ENCODE measurements at regions of chr3 and their contacts with region 1.

Region 1: DNA sequence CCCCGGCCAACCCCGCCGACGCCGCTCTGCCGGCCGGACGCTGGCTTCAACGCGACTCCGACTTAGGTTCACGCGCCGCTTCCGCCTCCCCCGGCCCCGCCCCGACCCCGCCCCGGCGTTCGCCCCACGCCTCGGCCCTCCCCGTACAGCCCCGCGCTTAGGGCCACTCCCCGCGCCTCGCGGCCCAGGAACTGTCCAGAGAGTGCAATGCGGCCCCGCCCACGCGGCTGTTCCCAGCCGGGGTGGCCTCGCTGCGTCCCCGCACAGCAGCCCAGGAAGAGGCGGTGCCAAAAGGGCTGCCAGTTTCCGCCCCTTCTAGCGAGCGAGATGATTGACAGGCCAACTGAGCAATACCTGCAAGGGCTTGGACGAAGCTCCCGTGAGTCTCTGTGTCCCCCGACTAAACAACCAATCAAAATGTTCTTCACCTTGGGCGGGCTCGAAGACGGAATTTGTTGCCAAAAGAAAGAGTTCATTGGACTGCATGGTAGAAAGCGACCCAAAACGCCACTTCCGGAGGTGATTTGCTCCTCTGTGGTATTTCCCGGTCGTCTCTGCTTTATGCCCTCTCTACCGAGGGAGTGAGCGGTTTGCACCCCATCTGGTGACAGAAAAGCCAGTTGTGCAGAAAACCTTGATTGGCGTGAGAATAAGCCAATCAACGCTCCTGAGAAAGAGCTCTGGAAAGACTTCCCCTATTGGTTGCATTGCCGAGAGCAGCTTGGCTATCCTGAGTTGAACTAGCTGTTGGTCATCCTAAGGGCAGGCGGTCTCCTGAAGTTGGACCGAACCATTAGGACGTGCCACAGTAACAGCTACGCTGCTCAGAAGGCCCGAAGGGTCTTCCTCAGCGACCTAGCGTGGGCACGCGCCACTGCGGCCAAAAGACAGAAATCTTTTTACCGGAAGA is at the start of gene UBP1:
- DNase-seq: peak; percentile 98 to 99 (median 99)
- H3K4me3 ChIP-seq: peak within 1 kb of the TSS; percentile 93 to 97
- H3K4me3 Mint-ChIP-seq: peak within 1 kb of the TSS; percentile 95 to 100 (median 99)
- H3K27ac ChIP-seq: peak within 1 kb of the TSS; percentile 91
- H3K27ac Mint-ChIP-seq: peak within 1 kb of the TSS; percentile 98 to 100 (median 100)
- H3K4me1 ChIP-seq: peaks cover 46% of the 10 kb centered on the region
- H3K4me1 Mint-ChIP-seq: peaks cover 31 to 57% (median 49%) of the 10 kb centered on the region in 4 donors
- H3K27me3 ChIP-seq: no peaks in the 10 kb centered on the region
- H3K27me3 Mint-ChIP-seq: no peaks in the 10 kb centered on the region
- total RNA-seq, gene UBP1: 91.8 to 94.1 TPM

Region 2: GRCh38 chr3:32106280-32106928 is 1334.2 kb before region 1 on chr3 and contains the start of gene GPD1L:
- CTCF ChIA-PET with region 1: no interaction called
- POLR2A ChIA-PET with region 1: no interaction called
- intact Hi-C with region 1: loop called (anchors 2 kb)
- DNase-seq: peak; percentile 88 to 91 (median 90)
- H3K4me3 ChIP-seq: peak within 1 kb of the TSS; percentile 12 to 87
- H3K4me3 Mint-ChIP-seq: peak within 1 kb of the TSS; percentile 94 to 98 (median 97)
- H3K27ac ChIP-seq: peak within 1 kb of the TSS; percentile 61
- H3K27ac Mint-ChIP-seq: peak within 1 kb of the TSS; percentile 75 to 95 (median 91)
- H3K4me1 ChIP-seq: peaks cover 33% of the 10 kb centered on the region
- H3K4me1 Mint-ChIP-seq: peaks cover 25 to 49% (median 36%) of the 10 kb centered on the region in 4 donors
- H3K27me3 ChIP-seq: no peaks in the 10 kb centered on the region
- H3K27me3 Mint-ChIP-seq: no peaks in the 10 kb centered on the region
- total RNA-seq, gene GPD1L: 22.7 to 32.5 TPM

Region 3: DNA sequence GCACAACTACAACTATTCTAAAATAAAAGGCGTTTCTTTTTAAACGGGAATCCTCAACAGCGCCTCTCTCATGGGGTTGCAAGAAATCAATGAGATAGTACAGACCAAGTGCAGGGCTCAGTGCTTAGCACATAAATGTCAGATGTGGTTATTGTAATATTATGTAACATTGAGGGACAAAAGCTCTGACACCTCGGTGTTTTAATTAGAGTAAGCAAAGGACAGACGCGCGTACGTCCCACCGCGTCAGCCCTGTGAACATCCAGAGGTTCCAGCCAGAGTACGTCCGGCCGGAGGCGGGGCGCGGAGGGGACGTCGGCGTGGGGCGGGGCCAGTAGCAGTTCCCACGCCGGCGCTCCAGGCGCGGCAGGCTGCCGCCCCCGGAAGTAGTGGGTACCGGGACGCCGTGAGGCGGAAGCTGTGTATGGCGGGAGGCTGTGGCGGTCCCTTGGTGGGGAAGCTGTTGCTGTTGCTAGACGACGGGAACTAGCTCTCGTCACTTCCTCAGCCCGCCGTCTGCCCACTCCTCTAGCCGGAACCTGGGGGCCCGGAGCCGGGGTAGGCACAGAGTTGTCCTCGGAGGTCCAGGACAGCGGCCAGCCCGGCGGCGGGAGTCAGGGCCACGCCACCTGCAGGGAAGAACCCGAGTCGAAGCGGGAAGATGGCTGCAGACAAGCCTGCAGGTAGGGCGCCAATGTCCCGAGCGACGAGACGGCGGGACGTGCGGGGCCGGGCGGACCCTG is 755.6 kb before region 1 on chr3 and contains the start of gene CNOT10:
- CTCF ChIA-PET with region 1: no interaction called
- POLR2A ChIA-PET with region 1: interaction called, 3 read pairs
- intact Hi-C with region 1: loop called (anchors 1 kb)
- DNase-seq: peak; percentile 95 to 98 (median 97)
- H3K4me3 ChIP-seq: peak within 1 kb of the TSS; percentile 50 to 95
- H3K4me3 Mint-ChIP-seq: peak within 1 kb of the TSS; percentile 90 to 94 (median 93)
- H3K27ac ChIP-seq: peak within 1 kb of the TSS; percentile 80
- H3K27ac Mint-ChIP-seq: peak within 1 kb of the TSS; percentile 87 to 99 (median 97)
- H3K4me1 ChIP-seq: peaks cover 30% of the 10 kb centered on the region
- H3K4me1 Mint-ChIP-seq: peaks cover 28 to 45% (median 37%) of the 10 kb centered on the region in 4 donors
- H3K27me3 ChIP-seq: no peaks in the 10 kb centered on the region
- H3K27me3 Mint-ChIP-seq: no peaks in the 10 kb centered on the region
- total RNA-seq, gene CNOT10: 46.5 to 47.6 TPM

Region 4: DNA sequence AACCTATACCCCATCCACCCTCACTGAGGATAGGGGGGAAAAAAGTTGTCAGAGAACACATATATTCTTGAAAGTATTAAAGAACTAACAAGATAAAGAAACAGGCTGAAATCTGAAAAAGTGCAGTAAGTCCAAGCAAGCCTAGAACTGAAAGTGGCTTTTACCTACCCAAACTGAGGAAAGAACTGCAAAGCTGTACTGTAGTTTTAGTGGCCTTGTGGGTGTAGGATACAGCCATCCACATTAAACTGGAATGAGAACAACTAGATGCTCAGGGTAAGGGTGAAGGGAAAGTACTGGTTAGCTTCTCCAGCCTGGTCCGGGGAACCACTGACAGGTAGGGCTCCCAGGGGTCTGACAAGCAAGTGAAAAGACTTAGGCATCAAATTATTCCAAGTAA is 10.5 kb before region 1 on chr3:
- CTCF ChIA-PET with region 1: interaction called, 3 read pairs
- POLR2A ChIA-PET with region 1: interaction called, 15 read pairs
- intact Hi-C with region 1: no loop called
- DNase-seq: no peak
- H3K4me3 ChIP-seq: no peak overlapping the region
- H3K4me3 Mint-ChIP-seq: peak overlapping the region in 4 of 8 donors; percentile 8 to 61 (median 40)
- H3K27ac ChIP-seq: no peak overlapping the region
- H3K27ac Mint-ChIP-seq: peak overlapping the region; percentile 15 to 77 (median 57)
- H3K4me1 ChIP-seq: peaks cover 69% of the 10 kb centered on the region
- H3K4me1 Mint-ChIP-seq: peaks cover 48 to 81% (median 66%) of the 10 kb centered on the region in 4 donors
- H3K27me3 ChIP-seq: no peaks in the 10 kb centered on the region
- H3K27me3 Mint-ChIP-seq: no peaks in the 10 kb centered on the region

Region 5: GRCh38 chr3:33798411-33799201 is 358.0 kb after region 1 on chr3 and contains the start of gene PDCD6IP:
- CTCF ChIA-PET with region 1: interaction called, 5 read pairs
- POLR2A ChIA-PET with region 1: interaction called, 32 read pairs
- intact Hi-C with region 1: loop called (anchors 1 kb)
- DNase-seq: peak; percentile 87 to 92 (median 89)
- H3K4me3 ChIP-seq: peak within 1 kb of the TSS; percentile 85 to 92
- H3K4me3 Mint-ChIP-seq: peak within 1 kb of the TSS; percentile 97 to 100 (median 99)
- H3K27ac ChIP-seq: peak within 1 kb of the TSS; percentile 82
- H3K27ac Mint-ChIP-seq: peak within 1 kb of the TSS; percentile 86 to 99 (median 98)
- H3K4me1 ChIP-seq: peaks cover 58% of the 10 kb centered on the region
- H3K4me1 Mint-ChIP-seq: peaks cover 33 to 67% (median 54%) of the 10 kb centered on the region in 4 donors
- H3K27me3 ChIP-seq: no peaks in the 10 kb centered on the region
- H3K27me3 Mint-ChIP-seq: no peaks in the 10 kb centered on the region
- total RNA-seq, gene PDCD6IP: 222 to 237 TPM

Measured in CD4-positive, alpha-beta memory T cell (primary cell).